ENCODE measurements at regions of chr17 and their contacts with region 1.

Region 1: DNA sequence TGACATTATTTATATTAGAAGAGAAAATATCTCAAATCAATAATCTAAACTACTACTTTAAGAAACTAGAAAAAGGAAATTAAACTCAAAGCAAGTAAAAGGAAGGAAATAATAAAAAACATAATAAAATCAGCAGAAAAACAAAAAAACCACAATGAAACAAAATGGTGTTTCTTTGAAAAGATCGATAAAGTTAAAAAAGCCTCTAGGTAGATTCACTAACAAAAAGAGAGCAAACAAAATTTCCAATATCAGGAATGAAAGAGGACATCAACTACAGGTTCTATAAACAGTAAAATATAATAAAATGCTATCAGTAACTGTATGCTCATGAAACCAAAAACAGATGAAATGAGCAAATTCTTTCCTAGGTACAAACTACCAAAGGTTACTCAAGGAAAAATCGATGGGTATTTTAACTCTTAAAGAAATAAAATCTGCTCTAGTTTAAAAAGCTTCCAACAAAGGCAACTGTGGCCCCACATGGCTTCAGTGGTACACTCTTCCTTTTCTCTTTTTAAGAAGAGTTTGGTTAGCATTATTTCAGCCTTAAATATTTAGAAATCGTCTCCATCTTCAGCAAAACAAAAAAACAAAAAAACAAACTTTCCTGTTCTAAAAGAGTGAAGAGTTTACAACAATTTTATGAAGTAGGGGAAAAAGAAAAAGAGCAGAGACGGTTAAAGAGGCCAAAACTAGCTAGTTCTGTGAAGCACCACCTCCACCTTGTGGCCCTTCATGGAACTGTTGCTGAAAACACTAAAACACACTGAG is 102.2 kb downstream of the TRIM37 start:
- DNase-seq: no peak
- H3K4me3 ChIP-seq: no peak overlapping the region
- H3K27ac ChIP-seq: no peak overlapping the region
- H3K4me1 ChIP-seq: peaks cover 0 to 3% (median 0%) of the 10 kb centered on the region in 3 donors
- H3K27me3 ChIP-seq: no peaks in the 10 kb centered on the region
- CTCF ChIP-seq: peak; percentile 91 to 95 (median 94)
- POLR2A ChIP-seq: no peak

Region 2: GRCh38 chr17:58517734-58518609 is 486.6 kb before region 1 on chr17:
- intact Hi-C with region 1: loop called (anchors 10 kb)
- DNase-seq: peak; percentile 100
- H3K4me3 ChIP-seq: peak overlapping the region; percentile 51 to 82 (median 79)
- H3K27ac ChIP-seq: peak overlapping the region; percentile 96 to 100 (median 98)
- H3K4me1 ChIP-seq: peaks cover 27 to 64% (median 33%) of the 10 kb centered on the region in 3 donors
- H3K27me3 ChIP-seq: no peaks in the 10 kb centered on the region
- CTCF ChIP-seq: no peak
- POLR2A ChIP-seq: peak in 2 of 4 donors; percentile 48 to 65

Region 3: DNA sequence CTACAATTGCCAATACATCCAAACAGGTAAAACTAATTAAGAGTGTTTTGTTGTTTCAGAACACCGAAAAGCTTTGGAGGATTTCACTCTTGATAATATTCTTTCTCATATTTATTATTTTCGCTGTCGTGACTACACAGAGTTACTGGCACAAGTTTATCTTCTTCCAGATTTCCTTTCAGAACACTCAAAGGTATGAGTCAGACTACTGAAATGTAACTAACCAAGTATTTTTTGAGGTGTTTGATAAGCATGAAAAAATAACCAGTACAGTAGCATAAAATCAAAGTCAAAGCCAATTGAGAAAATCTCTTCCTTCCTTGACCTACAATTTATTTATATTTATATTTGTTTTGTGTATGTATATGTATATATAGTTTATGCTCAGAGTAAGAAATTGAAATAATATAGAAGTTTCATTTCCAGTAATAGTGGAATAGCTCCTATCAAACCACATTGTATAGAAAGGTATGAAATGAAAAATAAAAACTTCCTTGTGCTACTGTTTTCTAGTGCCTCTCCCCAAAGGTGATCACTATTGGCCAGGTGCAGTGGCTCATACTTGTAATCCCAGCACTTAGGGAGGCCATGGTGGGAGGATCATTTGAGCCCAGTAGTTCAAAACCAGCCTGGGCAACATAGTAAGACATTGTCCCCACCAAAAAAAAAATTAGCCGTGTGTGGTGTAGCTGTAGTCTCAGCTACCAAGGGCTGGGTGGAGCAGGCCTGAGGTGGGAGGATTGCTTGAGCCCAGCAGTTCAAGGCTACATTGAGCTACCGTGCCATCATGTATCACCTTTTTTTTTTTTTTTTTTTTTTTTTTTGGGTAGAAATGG is 301.2 kb before region 1 on chr17:
- intact Hi-C with region 1: loop called (anchors 10 kb)
- DNase-seq: no peak
- H3K4me3 ChIP-seq: no peak overlapping the region
- H3K27ac ChIP-seq: peak overlapping the region in 1 of 4 donors; percentile 23
- H3K4me1 ChIP-seq: no peaks in the 10 kb centered on the region
- H3K27me3 ChIP-seq: no peaks in the 10 kb centered on the region
- CTCF ChIP-seq: no peak
- POLR2A ChIP-seq: no peak

Region 4: GRCh38 chr17:58822473-58823270 is 181.9 kb before region 1 on chr17:
- intact Hi-C with region 1: no loop called
- DNase-seq: no peak
- H3K4me3 ChIP-seq: no peak overlapping the region
- H3K27ac ChIP-seq: no peak overlapping the region
- H3K4me1 ChIP-seq: no peaks in the 10 kb centered on the region
- H3K27me3 ChIP-seq: peaks cover 0 to 7% (median 0%) of the 10 kb centered on the region in 4 donors
- CTCF ChIP-seq: no peak
- POLR2A ChIP-seq: no peak

Measured in esophagus squamous epithelium (tissue), 5 donors.